Naive thymus-derived CD4-positive, alpha-beta T cell (primary cell): ENCODE measurements at regions of chr17 and their contacts with region 1.

Region 1: GRCh38 chr17:49369089-49369488 is 7.0 kb upstream of the ZNF652 start:
- DNase-seq: no peak
- ATAC-seq: no peak
- H3K4me3 ChIP-seq: no peak overlapping the region
- H3K4me3 Mint-ChIP-seq: no peak overlapping the region
- H3K27ac ChIP-seq: no peak overlapping the region
- H3K27ac Mint-ChIP-seq: no peak overlapping the region
- H3K4me1 ChIP-seq: peaks cover 0 to 10% of the 10 kb centered on the region in 2 donors
- H3K4me1 Mint-ChIP-seq: peaks cover 6 to 20% (median 16%) of the 10 kb centered on the region in 7 donors
- H3K27me3 ChIP-seq: no peaks in the 10 kb centered on the region
- H3K27me3 Mint-ChIP-seq: no peaks in the 10 kb centered on the region

Region 2: DNA sequence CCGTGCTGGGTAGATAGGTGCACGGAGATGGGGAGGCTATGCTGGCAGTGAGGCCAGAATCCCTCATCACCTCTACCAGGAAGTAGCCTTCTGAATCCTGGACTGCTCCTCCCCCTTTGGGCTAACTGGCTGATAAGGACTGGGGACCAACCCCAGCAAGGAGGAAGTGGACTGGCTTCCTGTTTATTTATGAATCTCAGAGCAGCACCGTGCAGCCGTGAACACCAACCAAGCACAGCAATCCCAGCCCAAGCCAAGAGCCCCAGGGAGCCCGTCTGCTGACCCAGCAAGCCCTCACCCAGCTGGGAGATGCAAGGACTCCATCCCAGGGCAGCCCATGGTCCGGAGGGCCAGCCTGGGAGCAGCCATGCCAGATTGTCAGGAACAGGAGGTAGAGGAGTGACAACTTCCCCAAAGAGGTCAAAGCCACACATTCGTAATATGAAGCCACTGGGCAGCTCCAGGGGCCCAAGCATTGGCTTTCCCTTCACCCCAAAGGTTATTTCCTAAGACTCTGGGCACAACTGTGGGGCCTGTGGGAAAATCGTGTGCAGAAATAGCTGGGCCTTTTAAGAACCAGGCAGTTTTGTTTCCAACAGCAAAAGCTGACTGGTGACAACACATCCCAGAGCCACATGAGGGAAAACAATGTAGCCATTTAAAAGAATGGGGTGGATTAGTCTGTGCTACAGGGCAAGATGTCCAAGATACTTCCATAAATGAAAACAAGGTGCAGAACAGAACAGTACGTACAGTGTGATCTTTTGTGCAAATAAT is 21.6 kb after region 1 on chr17:
- CTCF ChIA-PET with region 1: interaction called, 8 read pairs
- POLR2A ChIA-PET with region 1: interaction called, 4 read pairs
- intact Hi-C with region 1: loop called (anchors 1 to 2 kb)
- DNase-seq: no peak
- ATAC-seq: peak; percentile 48
- H3K4me3 ChIP-seq: peak overlapping the region; percentile 29
- H3K4me3 Mint-ChIP-seq: peak overlapping the region; percentile 21 to 83 (median 58)
- H3K27ac ChIP-seq: no peak overlapping the region
- H3K27ac Mint-ChIP-seq: peak overlapping the region; percentile 44 to 93 (median 71)
- H3K4me1 ChIP-seq: peaks cover 43 to 51% of the 10 kb centered on the region in 2 donors
- H3K4me1 Mint-ChIP-seq: peaks cover 48 to 70% (median 63%) of the 10 kb centered on the region in 7 donors
- H3K27me3 ChIP-seq: no peaks in the 10 kb centered on the region
- H3K27me3 Mint-ChIP-seq: no peaks in the 10 kb centered on the region

Region 3: DNA sequence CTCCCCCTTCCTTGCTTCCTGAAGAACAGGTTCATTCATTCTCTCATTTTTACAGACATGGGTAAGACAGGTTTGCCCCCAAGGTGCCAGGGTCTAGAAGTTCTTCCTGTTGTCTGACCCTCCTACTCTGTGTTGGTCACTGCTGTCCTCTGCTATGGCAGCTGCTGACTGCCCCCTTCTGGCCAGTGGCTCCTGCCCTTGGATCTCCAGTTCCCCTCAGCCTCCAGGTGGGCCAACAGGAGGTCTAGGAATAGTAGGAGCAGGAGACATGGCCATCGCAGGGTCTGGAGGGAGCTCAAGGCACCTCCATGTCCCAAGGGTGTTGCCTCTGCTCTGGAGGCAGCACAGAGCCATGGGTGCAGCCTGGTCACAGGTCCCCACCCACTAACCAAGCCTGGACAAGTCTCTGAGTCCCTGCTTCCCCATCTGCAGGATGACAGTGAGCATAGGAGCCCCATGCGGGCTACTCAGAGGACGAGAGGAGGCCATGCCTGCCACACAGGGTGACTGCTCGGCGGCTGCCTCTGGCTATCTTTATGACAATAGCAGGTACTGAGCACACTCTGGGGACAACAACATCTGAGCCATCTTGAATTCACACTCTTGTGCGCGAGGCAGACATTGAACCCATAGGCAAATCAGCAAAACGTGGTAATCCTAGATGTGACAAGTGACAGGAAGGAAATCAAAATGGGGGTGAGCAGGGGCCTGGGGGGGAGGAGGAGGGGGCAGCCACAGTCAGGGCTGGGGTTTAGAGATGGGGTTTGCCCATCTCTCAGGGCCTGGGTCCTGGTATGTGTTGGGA is 179.6 kb after region 1 on chr17:
- CTCF ChIA-PET with region 1: no interaction called
- POLR2A ChIA-PET with region 1: no interaction called
- intact Hi-C with region 1: no loop called
- DNase-seq: no peak
- ATAC-seq: no peak
- H3K4me3 ChIP-seq: no peak overlapping the region
- H3K4me3 Mint-ChIP-seq: no peak overlapping the region
- H3K27ac ChIP-seq: no peak overlapping the region
- H3K27ac Mint-ChIP-seq: no peak overlapping the region
- H3K4me1 ChIP-seq: no peaks in the 10 kb centered on the region
- H3K4me1 Mint-ChIP-seq: peaks cover 0 to 3% (median 0%) of the 10 kb centered on the region in 7 donors
- H3K27me3 ChIP-seq: no peaks in the 10 kb centered on the region
- H3K27me3 Mint-ChIP-seq: peaks cover 0 to 16% (median 0%) of the 10 kb centered on the region in 5 donors